Heart right ventricle (tissue), 16 donors: ENCODE measurements at regions of chr13 and their contacts with region 1.

Region 1: GRCh38 chr13:75482070-75482819 is at the start of gene TBC1D4:
- DNase-seq: peak; percentile 83
- ATAC-seq: peak; percentile 83 to 93 (median 90)
- H3K4me3 ChIP-seq: peak within 1 kb of the TSS; percentile 70 to 95 (median 92)
- H3K27ac ChIP-seq: peak within 1 kb of the TSS; percentile 64 to 94 (median 90)
- H3K4me1 ChIP-seq: peaks cover 0 to 28% (median 18%) of the 10 kb centered on the region in 9 donors
- H3K27me3 ChIP-seq: peaks cover 0 to 37% (median 0%) of the 10 kb centered on the region in 7 donors
- CTCF ChIP-seq: peak; percentile 59 to 93 (median 81)
- total RNA-seq, gene TBC1D4: 56.4 to 124 (median 102) TPM

Region 2: DNA sequence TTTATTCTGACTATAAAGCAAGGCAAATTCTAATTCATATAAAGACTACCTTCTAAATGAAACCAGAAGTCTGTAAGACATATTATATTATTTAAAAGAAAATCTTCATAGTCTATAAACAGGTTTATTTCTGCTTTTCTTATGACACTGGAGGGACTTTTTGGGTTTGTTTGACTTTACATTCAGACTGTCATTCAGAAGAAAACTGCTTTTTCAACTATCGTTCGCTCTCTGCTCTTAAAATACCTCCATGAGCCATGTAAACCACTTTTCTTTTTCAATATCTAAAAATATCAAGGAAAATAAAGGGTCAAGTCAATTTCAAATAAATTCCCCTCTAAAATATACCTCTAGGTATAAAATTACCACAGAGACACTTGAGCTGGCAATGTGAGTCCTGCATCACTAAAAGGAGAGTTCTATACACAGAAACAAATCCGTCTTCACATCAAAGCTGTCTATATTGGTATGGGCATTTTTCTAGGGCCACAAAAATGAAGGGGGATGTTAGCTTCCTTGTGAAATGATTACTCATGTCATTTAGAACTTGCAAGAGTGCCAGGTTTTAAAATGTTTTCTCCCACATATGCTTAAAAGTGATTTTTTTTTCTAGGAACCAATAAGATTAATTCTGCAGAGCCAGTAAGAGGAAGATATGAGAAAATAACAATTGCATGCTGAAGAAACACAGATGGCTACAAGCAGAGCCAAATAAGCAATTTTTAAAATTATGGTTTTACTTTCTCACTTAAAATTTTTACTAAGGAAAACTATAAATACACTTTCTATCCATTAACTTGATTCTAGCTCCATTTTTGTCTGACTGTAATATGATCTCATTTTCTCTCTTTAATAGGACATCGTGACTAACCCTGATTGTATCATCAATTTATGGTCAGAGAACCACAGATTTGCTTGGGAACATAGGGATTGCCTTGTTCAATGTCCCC is 182.1 kb before region 1 on chr13:
- intact Hi-C with region 1: loop called in 1 of 10 experiments (anchors 10 kb)
- DNase-seq: no peak
- ATAC-seq: no peak
- H3K4me3 ChIP-seq: no peak overlapping the region
- H3K27ac ChIP-seq: no peak overlapping the region
- H3K4me1 ChIP-seq: peaks cover 0 to 32% (median 7%) of the 10 kb centered on the region in 9 donors
- H3K27me3 ChIP-seq: no peaks in the 10 kb centered on the region
- CTCF ChIP-seq: no peak

Region 3: GRCh38 chr13:75372517-75372916 is 109.7 kb before region 1 on chr13:
- intact Hi-C with region 1: loop called (anchors 2 to 5 kb)
- DNase-seq: peak in 1 of 2 donors; percentile 52
- ATAC-seq: peak in 6 of 8 donors; percentile 33 to 55 (median 48)
- H3K4me3 ChIP-seq: peak overlapping the region in 1 of 10 donors; percentile 9
- H3K27ac ChIP-seq: peak overlapping the region in 8 of 10 donors; percentile 38 to 81 (median 62)
- H3K4me1 ChIP-seq: peaks cover 0 to 67% (median 40%) of the 10 kb centered on the region in 9 donors
- H3K27me3 ChIP-seq: no peaks in the 10 kb centered on the region
- CTCF ChIP-seq: peak; percentile 54 to 86 (median 81)

Region 4: DNA sequence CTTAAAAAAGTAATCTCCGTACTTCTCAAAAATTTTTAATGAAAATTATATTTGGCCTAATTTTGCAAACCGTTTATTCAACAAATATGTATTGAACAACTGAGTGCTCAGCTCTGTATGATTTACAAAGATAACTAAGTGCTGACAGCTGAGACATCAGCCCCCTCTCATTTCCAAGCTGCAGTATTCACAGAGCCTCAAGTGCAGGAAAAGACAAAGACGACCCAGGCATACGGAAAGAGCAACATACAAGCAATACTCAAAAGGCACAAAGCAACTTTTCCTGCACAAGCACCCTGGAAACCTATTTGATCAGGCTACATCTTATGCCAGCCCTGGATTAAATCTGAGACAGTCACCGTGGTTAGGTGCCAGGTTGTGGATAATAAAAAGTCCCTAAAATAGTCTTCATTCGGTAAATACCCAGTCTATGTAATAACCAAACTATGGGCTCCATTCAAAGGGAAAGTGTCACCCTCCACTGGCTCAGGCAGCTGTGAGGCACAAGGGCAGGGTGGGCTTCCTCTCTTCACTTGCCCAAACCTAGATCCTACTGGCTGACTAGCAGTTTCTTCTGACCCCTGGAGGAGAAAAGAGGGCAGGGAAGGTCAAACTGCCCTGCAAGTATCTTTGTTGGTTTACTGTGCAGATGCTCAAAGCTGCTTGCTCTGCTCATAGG is 65.8 kb before region 1 on chr13:
- intact Hi-C with region 1: loop called in 1 of 10 experiments (anchors 10 kb)
- DNase-seq: no peak
- ATAC-seq: peak in 2 of 8 donors; percentile 7 to 11
- H3K4me3 ChIP-seq: no peak overlapping the region
- H3K27ac ChIP-seq: peak overlapping the region; percentile 32 to 80 (median 61)
- H3K4me1 ChIP-seq: peaks cover 0 to 70% (median 48%) of the 10 kb centered on the region in 9 donors
- H3K27me3 ChIP-seq: no peaks in the 10 kb centered on the region
- CTCF ChIP-seq: no peak

Region 5: DNA sequence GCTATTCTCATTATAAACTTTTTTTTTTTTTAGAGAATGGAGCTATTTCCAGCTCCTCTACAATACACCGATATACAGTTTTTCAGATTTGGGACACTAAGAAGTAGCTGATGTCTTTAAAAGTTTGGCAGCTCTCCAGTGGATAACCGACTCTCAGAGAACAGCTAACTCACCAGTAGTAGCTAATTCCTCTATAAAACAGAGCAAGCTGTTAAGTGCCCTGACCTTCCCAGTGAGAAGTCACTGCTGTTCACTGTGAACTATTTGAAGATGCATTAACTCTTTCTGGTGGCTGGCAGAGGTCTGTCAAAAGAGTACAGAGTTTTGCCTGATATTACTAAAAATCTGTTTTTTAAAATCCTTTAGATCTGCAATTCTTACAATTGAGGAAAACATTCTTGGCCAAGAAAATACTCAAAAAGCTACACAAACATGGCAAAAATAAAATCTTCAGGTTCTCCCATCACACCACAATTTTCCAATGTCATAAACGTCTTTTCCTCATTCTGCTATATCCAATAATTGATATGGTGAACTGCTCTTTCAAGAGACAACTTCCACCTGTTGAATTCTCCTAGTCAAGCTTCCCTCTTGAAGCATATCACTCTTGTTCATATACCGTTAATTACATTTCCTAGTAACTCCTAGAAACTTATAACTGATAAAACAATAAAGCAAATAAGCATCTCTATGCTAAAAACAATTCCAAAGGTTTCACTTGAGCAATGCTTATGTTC is 44.5 kb before region 1 on chr13:
- intact Hi-C with region 1: loop called in 2 of 10 experiments (anchors 5 kb)
- DNase-seq: peak in 1 of 2 donors; percentile 26
- ATAC-seq: peak; percentile 50 to 73 (median 62)
- H3K4me3 ChIP-seq: peak overlapping the region in 1 of 10 donors; percentile 0
- H3K27ac ChIP-seq: peak overlapping the region in 8 of 10 donors; percentile 21 to 77 (median 58)
- H3K4me1 ChIP-seq: peaks cover 0 to 58% (median 33%) of the 10 kb centered on the region in 9 donors
- H3K27me3 ChIP-seq: no peaks in the 10 kb centered on the region
- CTCF ChIP-seq: no peak

Region 6: DNA sequence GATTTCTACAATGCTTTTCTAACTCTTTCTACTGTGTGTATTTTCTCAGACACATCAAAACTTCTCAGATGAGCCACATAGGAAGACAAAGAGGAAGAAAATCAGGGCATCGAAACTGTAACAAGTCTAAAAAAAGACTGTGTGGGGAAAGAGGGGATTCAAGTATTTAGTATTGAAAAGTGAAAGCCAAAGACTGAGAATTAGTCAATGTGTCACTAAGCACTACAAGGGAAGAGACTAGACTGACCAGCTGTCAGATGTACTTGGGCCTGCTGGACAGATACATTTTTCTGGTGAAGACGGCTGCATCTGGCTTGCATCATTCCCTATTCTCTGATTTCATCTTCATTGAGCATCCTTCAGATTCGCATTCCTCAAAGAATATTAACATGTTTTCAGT is 30.0 kb after region 1 on chr13:
- intact Hi-C with region 1: no loop called
- DNase-seq: no peak
- ATAC-seq: peak in 2 of 8 donors; percentile 17 to 25
- H3K4me3 ChIP-seq: no peak overlapping the region
- H3K27ac ChIP-seq: no peak overlapping the region
- H3K4me1 ChIP-seq: peaks cover 0 to 12% (median 0%) of the 10 kb centered on the region in 9 donors
- H3K27me3 ChIP-seq: no peaks in the 10 kb centered on the region
- CTCF ChIP-seq: no peak

Region 7: DNA sequence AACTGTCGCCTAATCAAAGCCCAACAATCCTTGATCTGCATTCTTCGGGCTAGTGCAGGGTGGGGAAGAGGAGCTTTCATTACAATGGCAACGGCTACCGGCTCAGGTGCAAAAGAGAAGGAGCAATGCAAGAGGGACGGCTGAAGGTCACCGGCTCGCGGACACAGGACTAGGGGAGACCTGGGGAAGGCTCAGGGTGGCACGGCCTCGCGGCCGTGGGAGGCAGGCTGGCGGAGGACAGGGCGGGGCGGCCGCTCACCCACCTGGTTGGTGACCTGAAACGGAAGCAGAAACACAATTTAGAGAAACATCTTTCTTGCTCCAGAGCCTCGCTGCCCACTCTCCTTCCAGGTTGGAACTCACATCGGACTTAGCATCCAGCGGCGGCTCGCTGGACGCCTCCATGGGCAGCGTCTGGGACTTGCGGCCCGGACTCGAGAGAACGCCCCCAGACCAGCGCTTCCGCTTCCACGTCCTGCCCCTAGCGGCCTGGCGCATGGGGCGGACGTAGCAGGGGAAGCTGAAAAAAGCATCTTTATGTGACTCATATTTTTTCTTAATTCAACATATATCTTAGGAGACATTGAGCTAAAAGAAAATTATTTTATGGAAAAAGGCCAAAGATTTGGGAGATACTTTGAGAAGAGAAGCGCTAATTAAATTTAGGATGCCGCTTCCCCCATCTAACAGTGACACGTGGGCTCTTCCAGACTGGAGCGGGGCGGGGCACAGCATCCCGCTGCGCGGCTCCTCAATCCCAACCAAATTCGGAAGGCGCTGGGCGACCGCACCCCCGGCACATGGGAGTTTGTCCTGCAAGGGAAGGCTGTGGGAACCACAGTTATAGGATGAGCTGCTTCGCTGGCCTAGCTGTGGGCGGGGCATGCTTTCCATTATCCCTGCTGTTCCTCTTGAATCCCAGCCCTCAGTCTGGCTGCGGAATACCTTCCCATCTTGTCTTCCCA is 55.4 kb after region 1 on chr13 and contains the start of gene COMMD6:
- intact Hi-C with region 1: loop called in 1 of 10 experiments (anchors 10 kb)
- DNase-seq: peak; percentile 75 to 80
- ATAC-seq: peak; percentile 94 to 98 (median 97)
- H3K4me3 ChIP-seq: peak within 1 kb of the TSS; percentile 26 to 89 (median 80)
- H3K27ac ChIP-seq: peak within 1 kb of the TSS; percentile 18 to 91 (median 82)
- H3K4me1 ChIP-seq: peaks cover 0 to 30% (median 15%) of the 10 kb centered on the region in 9 donors
- H3K27me3 ChIP-seq: no peaks in the 10 kb centered on the region
- CTCF ChIP-seq: peak; percentile 8 to 70 (median 57)
- total RNA-seq, gene COMMD6: 96.5 to 138 (median 124) TPM

Region 8: DNA sequence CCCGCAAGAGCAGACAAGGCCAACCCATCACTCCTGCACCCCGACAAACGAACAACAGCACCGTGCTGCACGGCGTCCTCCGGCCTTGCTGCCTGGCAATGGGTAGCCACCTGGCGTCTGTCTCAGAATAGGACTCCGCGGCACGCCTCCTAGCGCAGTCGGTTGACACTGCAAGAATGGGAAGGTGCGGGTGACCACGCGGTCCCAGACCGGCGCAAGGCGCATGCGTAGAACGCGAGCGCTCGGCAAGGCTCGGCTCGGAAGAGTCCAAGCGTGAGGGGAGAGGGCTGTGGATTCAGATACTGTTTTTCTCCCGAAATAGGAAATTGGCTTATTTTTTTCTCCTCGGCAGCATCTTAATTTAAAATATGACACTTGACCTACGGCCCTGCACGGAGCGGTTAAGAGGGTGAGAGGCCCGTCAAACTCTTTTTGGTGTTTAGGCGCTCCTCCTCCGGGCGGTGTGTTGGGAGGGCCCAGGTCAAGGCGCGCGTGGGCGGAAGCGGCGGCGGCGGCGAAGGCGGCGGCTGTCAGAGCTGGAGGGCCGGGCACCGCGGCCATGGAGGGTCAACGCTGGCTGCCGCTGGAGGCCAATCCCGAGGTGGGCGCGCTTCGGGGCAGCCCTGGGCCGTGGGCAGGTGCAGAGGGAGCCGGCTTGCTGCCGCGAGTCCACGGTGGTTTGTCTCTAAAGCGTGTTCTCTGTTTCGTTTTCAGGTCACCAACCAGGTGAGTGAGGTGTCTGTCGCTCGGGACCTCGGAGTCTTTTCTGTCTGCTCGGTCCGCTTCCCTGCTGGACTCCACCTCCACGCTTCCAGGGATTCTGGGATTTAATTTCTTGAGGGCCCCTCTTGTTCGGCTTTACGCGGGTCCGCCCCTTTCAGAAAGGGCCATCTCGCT is 67.3 kb after region 1 on chr13 and contains the start of gene UCHL3:
- intact Hi-C with region 1: loop called in 6 of 10 experiments (anchors 2 to 5 kb)
- DNase-seq: peak; percentile 96 to 98
- ATAC-seq: peak; percentile 97 to 99 (median 98)
- H3K4me3 ChIP-seq: peak within 1 kb of the TSS; percentile 56 to 96 (median 83)
- H3K27ac ChIP-seq: peak within 1 kb of the TSS; percentile 41 to 98 (median 79)
- H3K4me1 ChIP-seq: peaks cover 0 to 28% (median 11%) of the 10 kb centered on the region in 9 donors
- H3K27me3 ChIP-seq: no peaks in the 10 kb centered on the region
- CTCF ChIP-seq: peak; percentile 66 to 97 (median 86)
- total RNA-seq, gene UCHL3: 17.1 to 28.1 (median 23.2) TPM